Transverse colon (tissue), 4 donors: ENCODE measurements at regions of chr11 and their contacts with region 1.

Region 1: GRCh38 chr11:124953753-124954589 is at the start of gene CCDC15:
- DNase-seq: peak; percentile 97
- H3K4me3 ChIP-seq: peak within 1 kb of the TSS; percentile 56 to 86 (median 68)
- H3K27ac ChIP-seq: peak within 1 kb of the TSS; percentile 74 to 86 (median 82)
- H3K4me1 ChIP-seq: peaks cover 0 to 13% (median 2%) of the 10 kb centered on the region in 4 donors
- H3K27me3 ChIP-seq: peaks cover 8% of the 10 kb centered on the region
- CTCF ChIP-seq: no peak
- EP300 ChIP-seq: no peak
- POLR2A ChIP-seq: peak; percentile 85
- total RNA-seq, gene CCDC15: 0.64 to 0.82 (median 0.75) TPM in 3 of 4 donors, not detected in the other

Region 2: DNA sequence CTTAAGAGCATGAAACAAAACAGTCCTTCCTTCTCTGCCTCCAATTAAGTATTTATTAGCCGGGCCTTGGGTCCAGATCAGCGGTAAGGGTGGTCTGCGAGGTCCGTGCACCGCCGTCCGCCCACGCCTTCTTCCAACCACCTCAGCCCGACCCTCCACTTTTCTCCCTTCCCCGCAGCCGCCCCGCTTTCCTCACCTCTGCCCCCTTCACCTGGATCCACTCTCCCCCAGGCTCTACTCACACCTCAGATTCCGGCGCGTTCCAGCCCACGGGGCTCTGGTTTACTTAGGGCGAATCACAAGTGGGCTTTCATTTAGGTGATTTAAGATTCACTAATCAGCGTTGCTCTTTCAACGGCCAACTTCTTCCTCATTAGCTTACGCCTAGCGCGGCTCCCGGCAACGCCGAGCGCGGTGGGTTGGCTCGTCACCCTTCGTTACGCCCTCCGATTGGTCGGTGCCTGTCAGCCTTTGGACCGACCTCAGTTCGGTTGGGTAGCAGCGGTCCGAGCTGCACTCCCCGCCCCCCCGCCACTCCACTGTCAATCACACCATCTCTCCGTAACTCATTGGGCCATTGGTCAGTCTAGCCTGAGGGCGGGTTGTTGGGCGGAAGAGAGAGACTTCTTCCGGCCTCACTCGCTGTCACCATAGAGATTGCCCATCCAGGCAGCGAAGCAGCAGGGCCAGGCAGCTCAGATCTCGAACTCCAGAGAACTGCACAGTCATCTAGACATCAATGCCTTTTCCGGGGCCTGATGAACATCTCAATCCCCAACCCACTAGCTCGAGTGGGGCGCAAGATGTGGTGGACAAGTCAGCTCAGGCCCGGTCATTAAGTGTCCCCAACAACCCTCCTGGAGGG is 157.6 kb after region 1 on chr11 and contains the start of gene TMEM218:
- in situ Hi-C with region 1: loop called in 1 of 4 experiments (anchors 10 kb)
- intact Hi-C with region 1: loop called (anchors 10 kb)
- DNase-seq: peak; percentile 99
- H3K4me3 ChIP-seq: peak within 1 kb of the TSS; percentile 56 to 91 (median 76)
- H3K27ac ChIP-seq: peak within 1 kb of the TSS; percentile 82 to 89 (median 84)
- H3K4me1 ChIP-seq: peaks cover 0 to 12% (median 3%) of the 10 kb centered on the region in 4 donors
- H3K27me3 ChIP-seq: peaks cover 5% of the 10 kb centered on the region
- CTCF ChIP-seq: no peak
- EP300 ChIP-seq: no peak
- POLR2A ChIP-seq: peak; percentile 41
- total RNA-seq, gene TMEM218: 2.6 to 18.2 (median 10.6) TPM

Region 3: DNA sequence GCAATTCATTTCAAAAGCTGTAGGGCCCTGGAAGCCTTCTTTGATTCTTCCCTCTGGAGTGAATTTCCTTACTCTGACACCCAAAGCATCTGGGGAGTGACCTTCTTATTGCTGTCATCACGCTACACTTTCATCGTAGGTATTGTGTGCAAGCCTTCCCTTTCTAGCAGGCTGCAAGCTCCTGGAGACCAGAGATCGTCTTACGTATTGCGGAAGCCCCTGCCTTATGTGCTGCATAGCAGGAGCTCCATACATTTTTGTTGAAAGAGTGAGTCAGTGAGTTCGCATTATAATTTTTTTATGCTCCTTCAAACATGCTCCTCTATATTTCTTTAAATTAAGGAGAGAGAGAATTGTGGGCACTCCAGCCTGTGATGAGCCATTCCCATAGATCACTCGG is 178.6 kb after region 1 on chr11:
- in situ Hi-C with region 1: loop called in 3 of 4 experiments (anchors 10 to 25 kb)
- intact Hi-C with region 1: no loop called
- DNase-seq: no peak
- H3K4me3 ChIP-seq: no peak overlapping the region
- H3K27ac ChIP-seq: no peak overlapping the region
- H3K4me1 ChIP-seq: no peaks in the 10 kb centered on the region
- H3K27me3 ChIP-seq: peaks cover 15% of the 10 kb centered on the region
- CTCF ChIP-seq: no peak
- EP300 ChIP-seq: no peak
- POLR2A ChIP-seq: no peak

Region 4: GRCh38 chr11:125141686-125142535 is 187.9 kb after region 1 on chr11:
- in situ Hi-C with region 1: loop called in 3 of 4 experiments (anchors 10 to 25 kb)
- intact Hi-C with region 1: no loop called
- DNase-seq: peak; percentile 30
- H3K4me3 ChIP-seq: no peak overlapping the region
- H3K27ac ChIP-seq: no peak overlapping the region
- H3K4me1 ChIP-seq: peaks cover 0 to 4% (median 0%) of the 10 kb centered on the region in 4 donors
- H3K27me3 ChIP-seq: peaks cover 28% of the 10 kb centered on the region
- CTCF ChIP-seq: peak; percentile 87 to 98 (median 96)
- EP300 ChIP-seq: no peak
- POLR2A ChIP-seq: no peak

Region 5: DNA sequence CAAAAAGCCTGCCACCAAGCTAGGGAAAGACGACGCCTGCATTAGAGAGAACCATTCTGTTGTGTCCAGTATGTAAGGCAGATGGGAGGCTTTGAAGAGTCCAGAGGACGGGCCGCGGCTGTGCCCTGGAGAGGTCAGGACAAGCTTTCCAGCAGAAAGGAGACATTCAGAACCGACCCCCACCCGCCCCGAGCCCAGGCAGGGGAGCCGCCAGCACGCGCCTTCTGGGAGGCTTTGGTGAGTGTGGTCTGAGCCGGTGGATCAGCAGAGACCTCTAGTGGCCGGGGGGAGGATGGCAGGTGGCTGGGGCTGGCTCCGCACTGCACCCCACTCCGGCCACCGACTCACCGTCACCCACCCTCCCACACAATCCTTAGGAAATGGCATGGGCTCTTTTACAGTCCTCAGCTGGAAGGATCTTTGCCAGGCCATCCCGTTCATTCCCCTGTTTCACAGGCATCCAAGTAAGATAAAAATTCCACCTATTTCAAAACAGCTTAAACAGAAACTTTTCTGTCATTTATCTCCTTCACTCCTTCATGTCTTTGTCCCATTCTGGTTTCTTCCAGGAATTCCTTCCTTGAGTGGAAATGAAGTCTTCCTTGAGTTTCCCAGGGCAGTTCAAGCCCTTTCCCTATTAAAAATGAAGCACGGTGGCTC is 450.9 kb after region 1 on chr11:
- in situ Hi-C with region 1: loop called in 1 of 4 experiments (anchors 25 kb)
- intact Hi-C with region 1: no loop called
- DNase-seq: peak; percentile 63
- H3K4me3 ChIP-seq: no peak overlapping the region
- H3K27ac ChIP-seq: no peak overlapping the region
- H3K4me1 ChIP-seq: peaks cover 0 to 7% (median 4%) of the 10 kb centered on the region in 4 donors
- H3K27me3 ChIP-seq: peaks cover 10% of the 10 kb centered on the region
- CTCF ChIP-seq: peak; percentile 69 to 95 (median 94)
- EP300 ChIP-seq: no peak
- POLR2A ChIP-seq: no peak